ENCODE measurements at regions of chr15 and their contacts with region 1.

Region 1: GRCh38 chr15:32651229-32651837 is 9.8 kb downstream of the SCG5 start:
- DNase-seq: peak; percentile 69
- H3K4me3 ChIP-seq: no peak overlapping the region
- CTCF ChIP-seq: peak; percentile 97

Region 2: DNA sequence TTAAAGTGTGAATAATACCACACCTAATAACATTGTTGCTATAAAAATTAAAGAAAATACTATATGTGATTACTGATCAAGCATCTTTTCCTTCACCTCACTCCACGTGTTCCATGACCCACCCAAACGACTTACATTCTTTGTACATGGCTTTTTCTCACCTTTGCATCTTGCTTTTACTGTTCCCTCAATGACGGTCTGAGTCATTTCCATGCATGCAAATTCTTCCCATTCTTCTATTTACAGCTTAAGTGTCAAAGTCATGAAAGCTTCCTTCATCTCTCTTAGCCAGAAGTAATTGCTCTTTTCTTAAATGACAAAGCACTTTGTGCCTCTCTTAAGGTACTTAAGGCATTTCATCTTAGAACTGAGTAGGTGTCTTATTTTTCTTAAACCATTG is 130.4 kb after region 1 on chr15:
- in situ Hi-C with region 1: no loop called
- DNase-seq: no peak
- H3K4me3 ChIP-seq: no peak overlapping the region
- CTCF ChIP-seq: no peak

Region 3: DNA sequence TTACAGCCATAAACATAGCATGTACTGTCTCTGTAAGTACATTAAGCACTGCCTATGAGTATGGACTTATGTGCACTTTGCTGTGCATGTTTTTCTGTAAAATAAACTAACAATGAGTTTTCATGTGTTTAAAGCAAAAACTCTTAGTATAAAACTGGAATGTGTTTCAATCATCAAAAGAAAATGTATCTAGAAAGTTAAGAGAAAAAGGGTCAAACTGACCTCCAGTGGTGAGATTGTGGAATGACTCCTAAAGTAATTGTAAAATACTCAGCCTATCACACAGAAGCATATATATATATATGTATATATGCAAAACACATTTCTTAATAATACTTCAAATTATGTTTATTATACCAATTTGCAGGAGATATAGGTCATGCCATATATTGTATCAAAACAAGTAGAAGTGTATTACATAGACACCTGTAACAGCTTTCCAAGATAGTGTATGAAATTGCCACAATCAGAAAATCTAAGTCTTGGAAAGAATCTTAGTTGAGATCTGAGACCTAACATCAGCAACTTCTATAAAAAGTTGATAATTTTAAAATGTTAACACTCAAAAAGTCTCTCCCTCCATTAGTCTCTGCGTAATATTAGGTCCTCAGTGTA is 343.6 kb after region 1 on chr15:
- in situ Hi-C with region 1: loop called (anchors 25 kb)
- DNase-seq: peak; percentile 70
- H3K4me3 ChIP-seq: no peak overlapping the region
- CTCF ChIP-seq: peak; percentile 63

Measured in astrocyte of the spinal cord (primary cell).